Prostate gland (tissue), 2 donors: ENCODE measurements at regions of chr22 and their contacts with region 1.

Region 1: DNA sequence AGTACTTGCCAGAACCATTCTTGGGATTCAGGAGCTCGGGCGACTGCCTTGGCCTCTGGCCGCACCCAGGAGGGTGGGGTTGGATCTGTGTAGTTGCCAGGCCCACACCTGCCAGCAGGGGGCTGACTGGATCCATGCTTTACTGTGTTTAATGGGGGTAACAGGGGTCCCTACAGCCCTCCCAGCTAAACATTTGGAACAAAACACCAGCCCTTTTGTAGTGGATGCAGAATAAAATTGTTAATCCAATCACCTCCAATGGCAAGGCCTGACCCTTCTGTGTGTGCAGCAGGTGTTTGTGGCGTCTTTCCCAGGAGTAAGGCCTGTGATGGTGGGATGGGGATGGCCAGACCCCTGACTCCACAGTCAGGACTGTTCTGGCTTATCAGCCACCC is 22.5 kb downstream of the SUN2 start:
- DNase-seq: no peak
- H3K4me3 ChIP-seq: no peak overlapping the region
- H3K27ac ChIP-seq: peak overlapping the region; percentile 66 to 82
- H3K4me1 ChIP-seq: peaks cover 8% of the 10 kb centered on the region
- H3K27me3 ChIP-seq: no peaks in the 10 kb centered on the region
- CTCF ChIP-seq: peak; percentile 51 to 78 (median 65)
- POLR2A ChIP-seq: no peak

Region 2: DNA sequence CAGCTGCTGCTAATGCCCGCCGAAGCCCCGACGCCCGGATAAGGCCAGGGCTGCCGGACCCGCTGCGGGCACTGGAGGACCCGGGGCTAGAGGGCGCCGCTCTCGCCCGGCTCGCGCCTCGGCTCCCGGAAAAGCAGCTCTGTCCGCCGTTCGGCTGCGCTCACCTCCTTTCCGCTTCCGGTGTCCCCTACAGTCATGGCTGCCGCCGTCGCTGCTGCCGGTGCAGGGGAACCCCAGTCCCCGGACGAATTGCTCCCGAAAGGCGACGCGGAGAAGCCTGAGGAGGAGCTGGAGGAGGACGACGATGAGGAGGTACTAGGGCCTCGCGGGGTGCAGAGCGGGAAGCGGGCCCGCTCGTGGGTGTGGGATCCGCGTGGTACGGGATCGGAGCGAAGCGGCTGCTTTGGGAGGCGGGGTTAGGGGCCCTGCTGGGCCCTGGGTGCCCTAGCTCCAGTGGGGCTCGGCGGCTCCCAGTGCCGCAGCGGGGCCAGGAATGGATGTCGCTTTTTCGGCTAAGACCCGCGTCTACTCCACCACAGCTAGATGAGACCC is 51.5 kb before region 1 on chr22 and contains the start of gene TOMM22:
- intact Hi-C with region 1: loop called (anchors 5 kb)
- DNase-seq: peak; percentile 89
- H3K4me3 ChIP-seq: peak within 1 kb of the TSS; percentile 67 to 70
- H3K27ac ChIP-seq: peak within 1 kb of the TSS; percentile 56 to 60
- H3K4me1 ChIP-seq: peaks cover 5% of the 10 kb centered on the region
- H3K27me3 ChIP-seq: no peaks in the 10 kb centered on the region
- CTCF ChIP-seq: peak; percentile 26 to 82 (median 78)
- POLR2A ChIP-seq: peak; percentile 54
- total RNA-seq, gene TOMM22: 44.5 to 50.8 TPM

Region 3: DNA sequence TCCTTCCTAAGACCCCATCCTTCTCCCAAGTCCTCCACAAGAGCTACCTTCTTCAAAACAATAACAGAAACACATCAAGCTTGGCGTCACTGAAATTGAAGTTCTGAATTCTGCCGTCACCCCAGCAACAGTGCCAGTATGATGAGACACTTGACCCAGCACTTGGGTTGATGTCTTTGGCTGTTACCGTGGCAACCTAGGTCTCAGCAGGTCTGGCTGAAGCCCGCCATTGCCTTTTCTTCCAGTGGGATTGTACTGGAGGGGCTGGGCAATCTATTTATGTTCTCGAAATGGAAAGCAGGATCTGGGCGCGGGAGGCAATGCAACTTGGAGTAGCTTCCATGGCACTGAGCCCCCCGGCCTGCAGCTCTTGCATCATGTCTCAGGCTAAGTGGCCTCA is 86.7 kb after region 1 on chr22:
- intact Hi-C with region 1: no loop called
- DNase-seq: no peak
- H3K4me3 ChIP-seq: no peak overlapping the region
- H3K27ac ChIP-seq: no peak overlapping the region
- H3K4me1 ChIP-seq: no peaks in the 10 kb centered on the region
- H3K27me3 ChIP-seq: no peaks in the 10 kb centered on the region
- CTCF ChIP-seq: no peak
- POLR2A ChIP-seq: no peak